Activated CD4-positive, alpha-beta T cell treated with anti-CD3 and anti-CD28 coated beads for 36 hours (primary cell): ENCODE measurements at regions of chr5 and their contacts with region 1.

Region 1: GRCh38 chr5:66529182-66529581 is 67.0 kb upstream of the MAST4 start:
- DNase-seq: peak; percentile 57
- ATAC-seq: no peak
- H3K4me3 Mint-ChIP-seq: no peak overlapping the region
- H3K27ac Mint-ChIP-seq: no peak overlapping the region
- H3K4me1 Mint-ChIP-seq: no peaks in the 10 kb centered on the region
- H3K27me3 Mint-ChIP-seq: peaks cover 19% of the 10 kb centered on the region

Region 2: DNA sequence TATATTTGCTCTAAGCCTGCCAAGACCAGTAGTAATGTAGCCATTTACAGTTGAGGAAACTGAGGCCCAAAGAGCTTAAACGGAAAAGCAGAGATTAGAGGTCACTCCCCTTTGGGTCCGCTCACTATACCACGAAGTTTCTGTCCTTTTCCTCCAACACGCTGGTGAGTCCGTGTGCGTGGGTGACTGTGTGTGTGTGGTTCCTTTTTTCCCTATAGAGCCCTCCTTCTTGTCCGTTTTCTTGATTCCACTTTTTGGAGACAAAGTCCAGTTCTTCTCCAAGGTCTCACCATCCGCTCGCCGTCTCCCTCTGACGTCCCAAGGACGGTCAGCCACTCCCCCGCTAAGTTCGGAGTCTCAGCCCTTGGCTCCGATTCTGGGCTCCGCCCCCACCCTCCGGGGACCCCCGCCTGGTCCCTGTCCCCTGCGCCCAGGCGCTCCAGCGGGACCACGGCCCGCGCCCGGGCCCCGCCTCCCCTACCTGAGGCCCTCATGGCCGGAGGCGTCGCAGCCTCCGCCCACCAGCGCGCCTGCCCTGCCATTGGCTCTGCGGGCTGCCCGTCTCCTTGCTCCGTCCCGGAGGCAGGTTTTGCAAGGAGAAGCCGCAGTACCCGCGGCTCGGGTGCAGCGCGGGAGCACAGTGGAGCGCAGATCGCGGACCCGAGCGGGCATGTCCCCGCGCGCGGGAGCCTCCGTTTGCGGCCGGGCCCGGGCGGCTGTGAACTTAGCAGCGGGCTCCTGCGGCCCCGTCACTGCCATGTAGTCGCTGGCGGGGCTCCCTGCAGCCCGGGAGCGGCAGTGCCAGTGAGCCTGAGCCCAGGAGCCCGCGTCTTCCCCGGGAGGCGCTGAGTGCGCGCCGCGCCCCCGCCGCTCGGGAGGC is 66.8 kb after region 1 on chr5 and contains the start of gene MAST4:
- CTCF ChIA-PET with region 1: no interaction called
- POLR2A ChIA-PET with region 1: no interaction called
- intact Hi-C with region 1: no loop called
- DNase-seq: peak; percentile 86
- ATAC-seq: peak; percentile 97
- H3K4me3 Mint-ChIP-seq: peak within 1 kb of the TSS; percentile 69
- H3K27ac Mint-ChIP-seq: no peak within 1 kb of the TSS
- H3K4me1 Mint-ChIP-seq: peaks cover 16% of the 10 kb centered on the region
- H3K27me3 Mint-ChIP-seq: peaks cover 49% of the 10 kb centered on the region
- total RNA-seq, gene MAST4: 19.2 to 26.7 TPM

Region 3: GRCh38 chr5:66717455-66718373 is 188.5 kb after region 1 on chr5:
- CTCF ChIA-PET with region 1: no interaction called
- POLR2A ChIA-PET with region 1: no interaction called
- intact Hi-C with region 1: no loop called
- DNase-seq: no peak
- ATAC-seq: no peak
- H3K4me3 Mint-ChIP-seq: no peak overlapping the region
- H3K27ac Mint-ChIP-seq: no peak overlapping the region
- H3K4me1 Mint-ChIP-seq: no peaks in the 10 kb centered on the region
- H3K27me3 Mint-ChIP-seq: peaks cover 15% of the 10 kb centered on the region

Region 4: GRCh38 chr5:66757188-66757833 is 228.1 kb after region 1 on chr5:
- CTCF ChIA-PET with region 1: interaction called, 3 read pairs
- POLR2A ChIA-PET with region 1: no interaction called
- intact Hi-C with region 1: loop called in 1 of 2 experiments (anchors 1 kb)
- DNase-seq: peak; percentile 64
- ATAC-seq: no peak
- H3K4me3 Mint-ChIP-seq: no peak overlapping the region
- H3K27ac Mint-ChIP-seq: no peak overlapping the region
- H3K4me1 Mint-ChIP-seq: no peaks in the 10 kb centered on the region
- H3K27me3 Mint-ChIP-seq: peaks cover 11% of the 10 kb centered on the region